ENCODE measurements at regions of chr1 and their contacts with region 1.

Region 1: DNA sequence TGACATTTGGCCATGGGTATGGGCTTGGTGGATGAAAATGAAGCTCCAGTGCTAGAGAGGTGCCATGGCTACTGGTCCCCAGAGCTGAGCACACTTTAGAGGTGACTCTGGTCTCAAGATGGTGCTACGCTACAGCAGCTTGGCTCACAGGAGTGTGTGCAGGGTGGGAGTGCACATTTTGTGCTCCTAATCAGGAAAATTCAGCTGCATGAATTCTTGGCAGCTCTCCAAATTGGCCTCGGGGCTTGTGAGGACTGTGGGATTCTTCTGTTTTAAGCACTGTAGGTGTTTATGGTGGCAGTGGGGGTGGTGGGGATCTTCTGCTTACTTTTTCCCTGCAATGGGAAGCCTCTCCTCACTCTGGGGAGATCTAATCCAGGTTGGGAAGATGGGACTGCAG is 17.3 kb upstream of the TIPRL start:
- DNase-seq: no peak
- ATAC-seq: no peak
- H3K4me3 ChIP-seq: no peak overlapping the region
- H3K27ac ChIP-seq: no peak overlapping the region
- H3K4me1 ChIP-seq: no peaks in the 10 kb centered on the region
- CTCF ChIP-seq: no peak
- EP300 ChIP-seq: no peak
- POLR2A ChIP-seq: no peak
- RAD21 ChIP-seq: no peak

Region 2: DNA sequence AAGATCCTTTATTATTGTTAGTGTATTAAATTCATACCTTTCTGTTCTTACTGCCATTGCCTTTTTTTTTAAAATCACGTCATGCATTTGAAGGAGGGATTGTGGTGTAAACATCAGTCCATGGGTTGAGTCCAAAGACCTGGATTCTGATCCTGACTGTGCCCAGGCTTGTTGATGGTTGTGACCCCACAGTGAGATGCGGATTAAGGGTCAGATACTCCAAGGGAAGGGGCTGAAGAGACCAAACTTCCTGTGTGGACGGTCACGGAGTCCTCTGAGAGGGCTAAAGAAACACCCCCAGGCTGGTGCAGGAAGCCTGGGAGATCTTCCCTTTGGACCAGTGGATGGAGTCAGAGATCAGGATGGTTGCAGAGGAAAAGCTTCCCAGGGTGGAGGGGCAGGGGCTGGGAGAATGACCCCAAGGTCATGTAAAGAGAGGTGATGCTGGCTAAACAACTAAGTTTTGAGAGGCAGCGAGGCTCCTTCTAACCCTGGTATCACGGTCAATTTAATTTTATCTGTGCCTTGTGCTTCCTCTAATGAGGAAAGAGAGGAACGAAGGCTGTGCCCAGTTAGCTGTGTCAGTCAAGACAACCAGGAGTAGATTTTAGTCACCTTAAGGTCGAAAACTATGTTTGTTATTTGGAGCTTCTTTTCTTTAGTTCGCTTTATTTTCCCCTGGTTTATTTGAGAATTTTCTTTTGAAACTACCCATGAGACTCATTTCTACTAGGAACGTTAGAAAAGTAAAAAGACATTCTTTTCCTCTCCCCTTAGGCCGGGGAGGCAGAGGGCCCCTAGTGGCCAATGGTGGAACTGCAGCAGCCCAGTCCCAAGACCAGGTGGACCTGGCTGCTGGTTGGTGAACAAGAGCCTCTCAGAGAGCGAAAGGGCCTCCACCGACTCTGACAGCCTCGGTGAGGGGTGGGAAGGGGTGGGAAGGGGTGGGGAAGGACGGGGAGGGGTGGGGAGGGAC is 16.0 kb before region 1 on chr1:
- CTCF ChIA-PET with region 1: interaction called, 11 read pairs
- POLR2A ChIA-PET with region 1: no interaction called
- DNase-seq: peak; percentile 90 to 93
- ATAC-seq: peak; percentile 99 to 100
- H3K4me3 ChIP-seq: no peak overlapping the region
- H3K27ac ChIP-seq: peak overlapping the region in 1 of 2 experiments; percentile 67; a peak in 3 of 6 replicates
- H3K4me1 ChIP-seq: 0 out of 3 replicates have a peak, but pooled peaks cover 4% of the 10 kb centered on the region
- CTCF ChIP-seq: peak; percentile 70
- EP300 ChIP-seq: no peak
- POLR2A ChIP-seq: no peak
- RAD21 ChIP-seq: peak; percentile 46 to 63; a peak in 4 of 5 replicates

Region 3: GRCh38 chr1:168466092-168466713 is 304.7 kb after region 1 on chr1:
- CTCF ChIA-PET with region 1: no interaction called
- POLR2A ChIA-PET with region 1: no interaction called
- DNase-seq: no peak
- ATAC-seq: no peak
- H3K4me3 ChIP-seq: no peak overlapping the region
- H3K27ac ChIP-seq: no peak overlapping the region
- H3K4me1 ChIP-seq: peaks cover 38% of the 10 kb centered on the region
- CTCF ChIP-seq: no peak
- EP300 ChIP-seq: no peak
- POLR2A ChIP-seq: no peak
- RAD21 ChIP-seq: no peak

Measured in A549 (cell line).